Sciatic nerve (tissue), 2 donors: ENCODE measurements at regions of chr17 and their contacts with region 1.

Region 1: DNA sequence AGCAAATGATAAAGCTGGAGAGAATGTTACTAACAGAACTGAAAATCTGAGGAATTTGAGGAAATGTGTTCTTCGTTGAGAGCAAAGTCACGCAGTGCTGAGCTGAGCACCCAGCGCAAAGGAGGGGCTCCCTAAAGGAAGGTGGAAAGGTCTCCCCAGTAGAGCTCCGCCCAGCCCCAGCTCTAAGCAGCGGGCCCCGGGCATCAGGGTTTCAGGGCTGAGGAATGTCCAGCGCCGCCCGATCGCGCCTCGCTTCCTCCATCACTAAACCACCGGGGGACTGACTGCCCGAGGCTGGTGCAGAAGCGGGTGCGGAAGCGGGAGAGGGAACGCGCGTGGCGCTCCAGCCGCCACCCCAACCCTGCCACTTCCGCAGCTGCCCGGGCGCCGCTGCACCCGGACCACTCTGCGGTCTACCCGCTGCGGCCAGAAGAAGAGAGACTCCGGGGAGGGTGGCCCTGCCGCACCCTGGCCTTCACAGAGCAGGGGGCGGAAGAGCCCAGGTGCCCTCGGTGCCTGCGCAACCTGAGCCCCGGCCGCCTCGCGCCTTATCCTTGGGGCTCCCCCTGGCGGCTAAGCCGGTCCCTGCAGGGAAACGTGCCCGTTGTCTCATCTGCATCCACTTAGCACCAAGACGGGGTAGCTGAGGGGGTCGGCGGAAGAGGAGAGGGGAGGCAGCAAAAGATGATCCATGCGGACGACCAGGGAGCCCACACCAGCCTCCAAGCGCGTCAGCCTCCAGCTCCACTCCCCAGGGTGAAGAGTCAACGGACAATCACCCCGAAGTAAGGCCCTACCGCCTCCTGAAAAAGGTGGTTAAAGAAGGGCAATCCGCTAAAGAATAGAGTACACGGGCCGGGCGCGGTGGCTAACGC is 12.4 kb upstream of the GUCY2D start:
- DNase-seq: peak; percentile 92
- ATAC-seq: peak; percentile 89

Region 2: GRCh38 chr17:7612294-7612640 is 377.8 kb before region 1 on chr17:
- intact Hi-C with region 1: no loop called
- DNase-seq: no peak
- ATAC-seq: no peak

Region 3: GRCh38 chr17:7862692-7863437 is 127.2 kb before region 1 on chr17:
- intact Hi-C with region 1: loop called (anchors 10 kb)
- DNase-seq: peak; percentile 75
- ATAC-seq: no peak

Region 4: DNA sequence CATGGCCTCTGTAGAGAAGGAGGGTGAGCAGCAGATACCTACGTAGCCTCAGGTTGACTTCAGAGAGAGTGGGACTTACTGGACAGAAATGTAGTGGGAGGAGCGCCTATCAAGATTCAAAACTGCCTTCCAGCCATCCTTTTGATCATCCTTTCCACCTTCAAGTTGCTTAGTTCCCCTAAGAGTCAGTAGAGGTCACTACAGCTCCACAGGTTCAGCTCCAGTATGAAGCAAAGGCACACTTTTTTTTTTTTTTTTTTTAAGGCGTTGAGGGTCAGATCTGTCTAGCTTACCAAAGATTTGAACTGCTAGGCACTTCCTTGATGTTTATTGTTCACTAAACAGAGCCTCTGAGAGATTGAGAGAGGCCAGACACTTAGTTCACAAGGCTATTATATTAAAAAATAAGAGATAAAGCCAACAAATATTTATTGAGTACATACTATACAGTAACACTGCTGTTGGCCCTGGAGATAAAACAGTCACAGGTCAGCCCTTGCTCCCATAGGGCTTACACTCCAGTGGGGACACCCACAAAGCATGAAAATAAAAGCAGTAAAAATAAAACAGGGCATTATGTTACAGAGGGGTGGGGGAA is 77.0 kb before region 1 on chr17:
- intact Hi-C with region 1: loop called (anchors 5 kb)
- DNase-seq: no peak
- ATAC-seq: peak; percentile 17